A673 (cell line): ENCODE measurements at regions of chr6 and their contacts with region 1.

Region 1: DNA sequence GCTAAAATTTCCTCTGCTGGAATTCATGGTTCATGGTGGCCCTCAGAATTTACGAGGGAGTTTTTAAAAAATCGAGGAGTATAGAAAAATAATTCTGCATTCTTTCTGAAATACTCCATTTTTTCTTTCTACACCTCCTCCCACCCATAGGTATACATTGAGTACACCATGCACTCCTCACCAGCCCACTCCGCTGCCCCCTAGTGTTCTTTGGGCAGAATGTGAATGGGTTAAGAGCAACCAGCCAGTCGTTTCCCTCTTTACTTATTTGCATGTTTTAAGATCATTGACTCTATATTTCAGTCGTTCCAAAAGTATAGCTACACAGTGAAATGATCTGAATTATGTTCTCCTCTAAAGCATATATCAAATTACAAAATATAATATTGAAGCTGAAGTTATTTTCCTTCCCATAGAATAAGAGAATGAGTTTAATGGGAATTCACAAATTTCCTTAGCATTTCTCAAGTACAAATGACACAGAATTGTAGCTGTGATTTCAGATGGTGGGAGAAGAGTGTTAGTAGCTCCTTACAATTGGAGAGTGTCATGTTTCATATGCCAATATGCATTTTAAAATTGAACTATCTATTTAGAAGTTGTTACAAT is 977.7 kb upstream of the SLC35B3 start:
- DNase-seq: peak; percentile 80
- H3K4me3 ChIP-seq: no peak overlapping the region
- H3K27ac ChIP-seq: no peak overlapping the region
- H3K4me1 ChIP-seq: peaks cover 4% of the 10 kb centered on the region
- H3K27me3 ChIP-seq: no peaks in the 10 kb centered on the region
- CTCF ChIP-seq: peak; percentile 91

Region 2: DNA sequence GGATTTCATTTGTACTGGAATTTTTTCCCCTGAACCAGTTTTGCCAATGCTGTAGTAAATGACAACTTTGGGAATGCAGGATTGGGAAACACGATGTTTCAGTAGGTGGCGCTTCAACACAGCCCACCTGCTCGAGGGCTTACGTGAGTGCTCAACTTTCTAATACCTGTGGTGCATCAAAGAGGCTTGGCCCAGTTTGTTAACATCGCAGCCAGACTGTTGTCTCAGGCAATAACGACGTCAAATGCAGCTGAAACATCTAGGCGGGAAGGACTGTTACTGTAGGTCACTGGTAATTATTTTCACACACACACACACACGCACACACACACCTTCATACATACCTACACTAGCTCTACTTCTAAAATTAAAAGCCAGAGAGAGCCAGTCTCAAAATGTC is 162.2 kb before region 1 on chr6:
- CTCF ChIA-PET with region 1: interaction called, 3 read pairs
- POLR2A ChIA-PET with region 1: no interaction called
- intact Hi-C with region 1: loop called (anchors 2 kb)
- DNase-seq: peak; percentile 59
- H3K4me3 ChIP-seq: no peak overlapping the region
- H3K27ac ChIP-seq: no peak overlapping the region
- H3K4me1 ChIP-seq: peaks cover 7% of the 10 kb centered on the region
- H3K27me3 ChIP-seq: no peaks in the 10 kb centered on the region
- CTCF ChIP-seq: peak; percentile 70